Natural killer cell (primary cell): ENCODE measurements at regions of chr3 and their contacts with region 1.

Region 1: DNA sequence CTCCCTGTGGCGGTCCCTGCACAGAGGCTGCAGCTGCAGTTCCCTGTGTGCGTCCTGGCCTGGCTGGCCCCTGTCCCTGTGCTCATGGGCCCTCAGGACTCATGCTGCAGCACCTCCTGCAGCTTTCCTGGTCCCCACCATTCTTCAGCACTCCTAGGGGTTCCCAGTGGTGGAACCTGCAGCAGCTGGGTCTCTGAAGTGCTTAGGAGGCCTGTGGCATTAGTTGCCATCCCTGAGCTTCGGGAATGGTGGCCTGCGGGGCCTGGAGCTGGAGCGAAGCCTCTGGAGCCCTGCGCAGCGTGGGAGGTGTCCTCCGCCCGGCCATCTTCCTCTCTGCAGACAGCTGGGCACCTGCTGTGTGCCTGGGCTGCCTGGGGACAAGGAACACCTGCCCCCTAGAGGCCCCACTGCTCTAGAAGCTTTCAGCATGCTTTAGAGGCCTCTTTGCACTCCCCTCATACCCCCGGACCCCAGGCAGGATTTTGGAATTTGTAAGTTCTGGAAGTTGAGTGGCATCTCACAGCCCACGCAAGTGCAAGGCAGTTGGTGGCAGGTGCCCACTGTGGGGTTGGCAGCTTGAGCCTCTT is 13.1 kb downstream of the PLXNA1 start:
- DNase-seq: no peak
- ATAC-seq: no peak
- H3K4me3 ChIP-seq: no peak overlapping the region
- H3K4me3 Mint-ChIP-seq: no peak overlapping the region
- H3K27ac ChIP-seq: no peak overlapping the region
- H3K27ac Mint-ChIP-seq: no peak overlapping the region
- H3K4me1 ChIP-seq: no peaks in the 10 kb centered on the region
- H3K4me1 Mint-ChIP-seq: no peaks in the 10 kb centered on the region
- H3K27me3 ChIP-seq: no peaks in the 10 kb centered on the region
- H3K27me3 Mint-ChIP-seq: no peaks in the 10 kb centered on the region
- CTCF ChIP-seq: no peak

Region 2: DNA sequence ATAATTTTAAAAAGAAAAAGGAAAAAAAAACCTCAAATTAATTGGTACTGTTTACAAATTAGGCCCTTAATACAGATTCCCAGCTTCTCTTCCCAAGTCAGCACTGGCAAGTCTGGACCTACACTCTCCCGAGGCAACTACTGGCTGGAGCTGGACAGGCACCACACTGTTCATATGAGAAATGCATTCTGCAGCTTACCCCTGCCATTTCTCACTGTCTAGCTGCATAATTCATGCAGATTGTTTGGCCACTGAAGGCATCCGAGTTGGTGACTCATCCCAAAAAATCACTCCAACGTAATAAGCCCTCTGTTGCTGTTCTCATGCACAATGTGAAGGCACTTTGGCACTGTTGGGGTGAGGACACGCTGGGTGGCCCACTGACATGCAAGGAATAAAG is 981.8 kb before region 1 on chr3:
- intact Hi-C with region 1: no loop called
- DNase-seq: no peak
- ATAC-seq: peak in 1 of 3 donors; percentile 14
- H3K4me3 ChIP-seq: no peak overlapping the region
- H3K4me3 Mint-ChIP-seq: no peak overlapping the region
- H3K27ac ChIP-seq: no peak overlapping the region
- H3K27ac Mint-ChIP-seq: no peak overlapping the region
- H3K4me1 ChIP-seq: no peaks in the 10 kb centered on the region
- H3K4me1 Mint-ChIP-seq: no peaks in the 10 kb centered on the region
- H3K27me3 ChIP-seq: no peaks in the 10 kb centered on the region
- H3K27me3 Mint-ChIP-seq: no peaks in the 10 kb centered on the region
- CTCF ChIP-seq: no peak

Region 3: GRCh38 chr3:126752303-126752842 is 243.6 kb before region 1 on chr3:
- intact Hi-C with region 1: loop called (anchors 10 kb)
- DNase-seq: peak; percentile 28 to 61
- ATAC-seq: peak in 2 of 3 donors; percentile 68 to 78
- H3K4me3 ChIP-seq: no peak overlapping the region
- H3K4me3 Mint-ChIP-seq: no peak overlapping the region
- H3K27ac ChIP-seq: no peak overlapping the region
- H3K27ac Mint-ChIP-seq: no peak overlapping the region
- H3K4me1 ChIP-seq: peaks cover 9% of the 10 kb centered on the region
- H3K4me1 Mint-ChIP-seq: peaks cover 10 to 18% of the 10 kb centered on the region in 2 donors
- H3K27me3 ChIP-seq: no peaks in the 10 kb centered on the region
- H3K27me3 Mint-ChIP-seq: no peaks in the 10 kb centered on the region
- CTCF ChIP-seq: peak; percentile 46